Gastrocnemius medialis (tissue), 4 donors: ENCODE measurements at regions of chr17 and their contacts with region 1.

Region 1: DNA sequence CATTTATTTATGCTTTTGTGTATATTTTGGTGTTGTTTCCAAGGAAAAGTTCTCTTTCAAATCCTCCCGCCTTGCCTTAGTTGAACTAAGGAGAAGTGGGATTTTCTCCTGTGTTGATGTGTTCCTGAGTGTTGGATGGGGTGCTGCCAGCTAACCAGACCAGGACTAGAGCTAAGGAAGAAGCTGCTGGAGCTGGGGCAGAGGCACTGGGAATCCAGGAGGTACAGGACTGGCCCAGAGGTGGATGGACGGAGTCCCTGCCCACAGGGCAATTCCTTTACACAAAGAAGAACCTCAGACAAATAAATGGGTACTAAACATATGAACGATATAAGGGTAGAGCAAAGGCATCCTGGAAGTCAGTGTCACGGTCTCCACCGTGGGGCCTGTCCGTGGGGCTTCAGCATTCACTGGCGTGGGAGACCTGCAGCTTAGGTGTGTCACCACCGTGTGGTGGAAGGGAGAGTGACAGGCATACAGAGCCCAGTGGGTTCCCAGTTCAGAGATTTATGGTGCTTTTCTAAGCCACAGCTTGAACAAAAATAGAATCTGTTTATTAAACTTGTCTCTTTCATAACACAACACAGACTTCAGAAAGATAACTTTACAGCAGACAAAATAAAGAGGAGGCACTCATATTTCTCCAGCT is 270.7 kb downstream of the NTN1 start:
- DNase-seq: peak in 1 of 2 donors; percentile 28
- ATAC-seq: peak; percentile 56 to 86
- H3K4me3 ChIP-seq: no peak overlapping the region
- H3K27ac ChIP-seq: peak overlapping the region in 3 of 4 donors; percentile 11 to 62 (median 33)
- H3K4me1 ChIP-seq: peaks cover 0 to 13% of the 10 kb centered on the region in 2 donors
- H3K27me3 ChIP-seq: no peaks in the 10 kb centered on the region
- CTCF ChIP-seq: peak; percentile 41 to 77 (median 59)
- POLR2A ChIP-seq: no peak

Region 2: GRCh38 chr17:8954339-8954738 is 337.7 kb before region 1 on chr17:
- in situ Hi-C with region 1: no loop called
- intact Hi-C with region 1: no loop called
- DNase-seq: peak; percentile 41 to 55
- ATAC-seq: no peak
- H3K4me3 ChIP-seq: no peak overlapping the region
- H3K27ac ChIP-seq: no peak overlapping the region
- H3K4me1 ChIP-seq: no peaks in the 10 kb centered on the region
- H3K27me3 ChIP-seq: peaks cover 0 to 3% (median 0%) of the 10 kb centered on the region in 3 donors
- CTCF ChIP-seq: no peak
- POLR2A ChIP-seq: no peak

Region 3: GRCh38 chr17:8991514-8992285 is 300.3 kb before region 1 on chr17:
- in situ Hi-C with region 1: loop called in 1 of 4 experiments (anchors 25 kb)
- intact Hi-C with region 1: loop called (anchors 10 kb)
- DNase-seq: peak in 1 of 2 donors; percentile 37
- ATAC-seq: peak in 1 of 2 donors; percentile 53
- H3K4me3 ChIP-seq: no peak overlapping the region
- H3K27ac ChIP-seq: no peak overlapping the region
- H3K4me1 ChIP-seq: no peaks in the 10 kb centered on the region
- H3K27me3 ChIP-seq: no peaks in the 10 kb centered on the region
- CTCF ChIP-seq: peak; percentile 41 to 67 (median 52)
- POLR2A ChIP-seq: no peak

Region 4: DNA sequence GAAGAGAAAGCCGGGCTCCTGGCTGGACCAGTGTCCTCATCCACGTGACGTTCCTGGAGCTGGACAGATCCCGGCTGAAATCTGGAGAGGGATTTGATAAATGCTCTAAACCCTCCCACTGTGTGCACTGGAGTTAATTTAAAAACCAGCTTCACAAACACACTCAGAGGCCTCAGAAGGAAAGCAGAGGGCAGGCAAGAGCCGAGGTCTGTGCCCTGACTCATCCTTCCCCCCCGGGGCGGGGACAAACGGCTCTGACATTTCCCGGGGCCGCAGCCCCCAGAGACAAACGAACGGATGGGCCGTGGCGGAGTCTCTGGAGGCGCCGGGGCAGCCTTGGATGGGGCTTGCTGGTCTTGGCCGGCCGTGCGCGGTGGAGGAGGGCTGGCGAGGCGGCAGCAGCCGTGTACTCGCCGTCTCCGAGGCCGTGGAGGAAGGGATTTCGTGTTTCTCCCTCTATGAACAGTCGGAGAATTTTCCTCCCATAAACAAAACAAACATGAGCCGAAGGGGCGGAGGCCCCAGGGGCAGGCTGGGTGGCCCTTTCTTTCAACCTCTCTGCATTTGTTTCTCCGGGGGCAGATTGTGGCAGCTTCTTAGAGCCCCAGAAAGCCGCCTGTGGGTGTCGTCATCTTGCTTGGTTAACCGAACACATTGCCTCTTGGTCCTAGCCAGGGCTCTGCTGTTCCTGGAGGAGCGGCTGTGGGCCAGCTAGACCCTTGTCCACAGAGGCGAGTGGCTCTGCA is 176.4 kb before region 1 on chr17:
- in situ Hi-C with region 1: no loop called
- intact Hi-C with region 1: loop called (anchors 10 kb)
- DNase-seq: peak; percentile 17 to 33
- ATAC-seq: peak; percentile 55 to 85
- H3K4me3 ChIP-seq: peak overlapping the region; percentile 33 to 45 (median 34)
- H3K27ac ChIP-seq: peak overlapping the region; percentile 13 to 43 (median 28)
- H3K4me1 ChIP-seq: peaks cover 0 to 4% of the 10 kb centered on the region in 2 donors
- H3K27me3 ChIP-seq: peaks cover 0 to 5% (median 4%) of the 10 kb centered on the region in 3 donors
- CTCF ChIP-seq: peak in 2 of 5 experiments; percentile 25 to 29
- POLR2A ChIP-seq: no peak

Region 5: DNA sequence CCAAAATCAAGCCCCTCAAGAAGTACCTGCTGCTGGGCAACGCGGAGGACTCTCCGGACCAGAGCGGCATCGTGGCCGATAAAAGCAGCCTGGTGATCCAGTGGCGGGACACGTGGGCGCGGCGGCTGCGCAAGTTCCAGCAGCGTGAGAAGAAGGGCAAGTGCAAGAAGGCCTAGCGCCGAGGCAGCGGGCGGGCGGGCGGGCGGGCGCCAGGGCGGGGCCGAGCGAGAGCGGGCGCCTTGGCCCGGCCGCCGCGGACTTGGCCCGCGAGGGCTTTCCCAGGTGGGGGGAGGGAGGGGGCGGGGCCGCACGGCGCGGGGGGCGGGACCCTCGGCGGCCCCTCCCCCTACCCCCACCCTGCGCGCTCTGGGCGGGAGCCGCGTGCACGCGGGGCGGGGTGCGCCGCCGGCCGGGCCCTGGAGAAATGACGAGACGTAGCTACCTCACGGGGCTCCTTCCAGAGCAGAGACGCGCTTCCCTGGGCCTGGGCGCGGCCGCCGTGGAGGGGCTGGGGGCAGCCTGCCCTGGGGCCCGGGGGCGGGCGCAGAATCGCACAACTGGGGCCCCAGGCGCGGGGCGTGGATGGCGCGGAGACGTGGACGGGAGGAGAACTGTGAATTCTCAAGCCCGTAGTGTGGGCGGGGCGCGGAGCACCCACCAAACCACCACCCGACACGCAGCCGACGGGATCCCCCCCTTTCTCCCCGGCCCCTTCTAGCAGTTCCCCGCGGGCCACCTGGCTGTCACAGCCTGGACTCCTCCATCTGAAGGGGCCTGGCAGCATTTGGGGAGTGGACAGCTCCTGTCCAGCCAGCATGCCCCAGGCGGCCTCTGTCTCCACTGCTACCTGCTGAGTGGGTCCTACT is 52.0 kb before region 1 on chr17:
- in situ Hi-C with region 1: no loop called
- intact Hi-C with region 1: loop called (anchors 2 kb)
- DNase-seq: peak; percentile 49 to 81
- ATAC-seq: peak; percentile 73 to 74
- H3K4me3 ChIP-seq: peak overlapping the region; percentile 57 to 86 (median 68)
- H3K27ac ChIP-seq: peak overlapping the region; percentile 85 to 97 (median 88)
- H3K4me1 ChIP-seq: peaks cover 9 to 23% of the 10 kb centered on the region in 2 donors
- H3K27me3 ChIP-seq: no peaks in the 10 kb centered on the region
- CTCF ChIP-seq: no peak
- POLR2A ChIP-seq: peak; percentile 66 to 75

Region 6: DNA sequence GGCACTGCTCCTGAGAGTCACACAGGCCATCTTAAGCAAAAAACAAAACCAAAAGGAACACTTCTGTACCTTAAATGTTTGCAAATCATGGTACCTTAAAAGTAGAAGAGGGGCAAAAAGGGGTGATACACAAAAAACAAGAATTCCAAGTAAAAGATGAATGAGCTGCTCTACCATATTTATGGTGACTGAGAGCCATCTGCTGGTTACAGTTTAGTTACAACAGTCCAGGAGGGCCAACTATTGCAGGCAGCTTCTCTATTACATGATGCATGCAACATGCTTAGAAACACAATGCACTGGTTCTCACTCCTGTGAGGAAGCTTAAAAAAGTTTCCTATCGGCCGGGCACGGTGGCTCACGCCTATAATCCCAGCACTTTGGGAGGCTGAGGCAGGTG is 230.0 kb after region 1 on chr17:
- in situ Hi-C with region 1: no loop called
- intact Hi-C with region 1: loop called (anchors 10 kb)
- DNase-seq: peak in 1 of 2 donors; percentile 15
- ATAC-seq: peak in 1 of 2 donors; percentile 62
- H3K4me3 ChIP-seq: no peak overlapping the region
- H3K27ac ChIP-seq: no peak overlapping the region
- H3K4me1 ChIP-seq: peaks cover 0 to 16% of the 10 kb centered on the region in 2 donors
- H3K27me3 ChIP-seq: no peaks in the 10 kb centered on the region
- CTCF ChIP-seq: peak; percentile 28 to 50 (median 36)
- POLR2A ChIP-seq: no peak